MCF 10A (cell line): ENCODE measurements at regions of chr1 and their contacts with region 1.

Region 1: DNA sequence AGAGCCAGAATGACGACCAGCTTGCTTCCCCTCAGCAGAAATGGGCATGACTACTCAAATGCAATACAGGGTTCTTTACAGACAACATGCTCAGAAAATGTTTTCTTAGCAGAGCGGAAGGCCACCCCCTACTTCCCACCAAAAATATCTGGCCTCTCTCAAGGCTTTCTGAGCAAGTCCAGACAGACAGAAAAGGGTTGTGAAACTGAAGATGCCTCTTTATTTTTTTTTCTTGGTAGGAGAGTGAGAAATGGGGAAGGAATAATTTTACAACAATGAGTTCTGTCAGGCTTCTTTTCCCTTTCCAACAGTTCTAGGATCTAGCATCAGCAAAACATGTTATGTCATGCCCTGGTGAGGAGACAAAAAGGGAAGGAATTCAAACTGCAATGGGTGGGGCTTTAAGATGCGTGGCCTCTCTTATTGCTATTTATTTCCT is 172.0 kb upstream of the CAMK1G start:
- DNase-seq: peak; percentile 99
- H3K4me3 Mint-ChIP-seq: peak overlapping the region; percentile 44
- H3K27ac Mint-ChIP-seq: peak overlapping the region; percentile 89
- H3K4me1 Mint-ChIP-seq: peaks cover 70% of the 10 kb centered on the region
- H3K27me3 Mint-ChIP-seq: no peaks in the 10 kb centered on the region
- CTCF ChIP-seq: no peak

Region 2: DNA sequence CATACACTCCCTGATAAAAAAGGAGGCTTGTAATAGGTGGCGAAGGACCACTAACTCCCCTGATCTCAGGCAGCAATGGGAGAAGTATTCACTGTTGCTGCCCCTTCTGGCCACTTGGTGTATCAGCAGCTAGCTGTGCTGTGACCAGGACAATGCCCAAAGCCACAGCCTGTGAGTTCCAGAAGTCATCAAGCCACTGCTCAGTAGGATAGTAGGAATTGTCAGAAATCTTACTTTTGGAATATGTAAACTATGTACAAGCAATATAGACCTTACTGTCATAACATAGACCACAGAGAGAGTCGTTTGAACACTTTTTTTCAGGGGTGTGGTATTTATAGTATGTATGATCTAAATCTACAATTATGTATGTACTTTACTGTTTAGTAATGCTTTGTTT is 76.3 kb before region 1 on chr1:
- CTCF ChIA-PET with region 1: interaction called, 11 read pairs
- POLR2A ChIA-PET with region 1: no interaction called
- intact Hi-C with region 1: no loop called
- DNase-seq: peak; percentile 75
- H3K4me3 Mint-ChIP-seq: no peak overlapping the region
- H3K27ac Mint-ChIP-seq: no peak overlapping the region
- H3K4me1 Mint-ChIP-seq: peaks cover 5% of the 10 kb centered on the region
- H3K27me3 Mint-ChIP-seq: no peaks in the 10 kb centered on the region
- CTCF ChIP-seq: peak; percentile 96

Region 3: DNA sequence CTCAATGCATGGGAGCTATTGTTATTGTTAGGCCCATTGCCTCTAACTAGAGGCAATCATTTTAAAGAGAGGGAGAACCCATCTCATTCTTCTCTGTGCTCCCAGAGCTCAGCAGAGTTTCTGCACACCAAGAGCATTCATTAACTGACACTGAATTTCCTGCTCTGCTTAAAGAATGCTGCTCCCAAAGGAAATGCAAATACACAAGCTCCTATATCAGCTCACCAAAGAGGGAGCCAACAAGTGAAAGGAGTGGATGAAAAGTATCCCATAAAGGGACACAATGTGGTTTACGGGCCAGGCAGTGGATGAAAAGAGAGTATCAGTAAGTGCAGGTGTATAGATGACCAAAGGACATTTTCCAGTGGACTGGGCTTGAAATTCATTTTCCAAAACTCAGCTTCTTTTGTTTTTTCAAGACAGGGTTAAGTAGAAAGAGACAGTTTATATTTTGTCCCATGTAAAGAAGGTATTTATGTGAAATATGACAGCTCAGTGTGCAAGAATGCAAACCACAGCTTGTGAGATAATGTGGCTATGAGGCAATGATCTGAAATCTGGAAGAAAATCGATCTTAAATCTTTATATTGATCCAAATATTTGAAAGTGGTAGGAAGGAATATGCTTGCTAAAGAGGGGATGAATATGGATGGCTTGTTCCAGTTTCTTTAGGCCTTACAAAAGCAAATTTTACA is 35.7 kb before region 1 on chr1:
- CTCF ChIA-PET with region 1: interaction called, 1,242 read pairs
- POLR2A ChIA-PET with region 1: interaction called, 6,956 read pairs
- intact Hi-C with region 1: no loop called
- DNase-seq: no peak
- H3K4me3 Mint-ChIP-seq: no peak overlapping the region
- H3K27ac Mint-ChIP-seq: peak overlapping the region; percentile 84
- H3K4me1 Mint-ChIP-seq: peaks cover 69% of the 10 kb centered on the region
- H3K27me3 Mint-ChIP-seq: no peaks in the 10 kb centered on the region
- CTCF ChIP-seq: no peak

Region 4: DNA sequence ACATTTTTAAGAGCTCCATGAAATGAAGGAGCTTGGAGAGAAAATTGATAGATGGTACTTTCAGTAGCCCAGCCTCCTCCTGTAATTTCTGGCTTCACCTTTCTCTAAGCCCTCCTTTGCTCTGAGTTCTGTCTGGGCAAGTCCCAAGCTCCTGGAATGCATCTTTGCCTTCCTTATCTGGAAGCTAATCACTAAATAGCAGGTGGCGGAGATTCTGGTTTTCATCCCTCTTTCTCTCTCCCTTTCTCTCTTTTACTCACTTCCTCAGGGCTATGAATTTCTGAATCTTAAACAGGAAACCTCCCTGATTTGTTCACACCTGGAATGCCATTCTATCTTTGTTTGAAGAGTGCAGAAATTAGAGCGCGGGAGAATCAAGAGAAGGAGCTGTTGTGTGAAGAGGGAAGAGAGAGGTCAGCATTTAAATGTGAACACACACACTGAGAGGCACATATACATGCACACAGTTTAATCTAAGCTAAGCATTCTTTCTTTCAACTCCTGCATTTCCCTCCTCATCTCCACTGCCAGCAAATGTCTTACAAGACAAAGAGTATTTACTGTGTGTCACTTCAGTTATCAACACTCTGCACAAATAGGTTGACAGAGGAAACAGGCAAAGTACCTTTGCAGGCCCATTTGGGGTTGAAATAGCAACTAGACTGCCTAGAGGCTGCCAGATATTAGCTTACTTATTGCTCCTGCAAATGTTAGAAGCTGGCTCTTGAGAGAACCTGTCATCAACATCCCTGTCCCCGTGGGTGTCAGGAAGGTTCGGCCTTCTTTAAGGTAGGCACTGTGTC is 27.4 kb before region 1 on chr1:
- CTCF ChIA-PET with region 1: interaction called, 1,242 read pairs
- POLR2A ChIA-PET with region 1: interaction called, 6,956 read pairs
- intact Hi-C with region 1: loop called (anchors 2 kb)
- DNase-seq: peak; percentile 72
- H3K4me3 Mint-ChIP-seq: peak overlapping the region; percentile 15
- H3K27ac Mint-ChIP-seq: peak overlapping the region; percentile 81
- H3K4me1 Mint-ChIP-seq: peaks cover 65% of the 10 kb centered on the region
- H3K27me3 Mint-ChIP-seq: no peaks in the 10 kb centered on the region
- CTCF ChIP-seq: no peak

Region 5: DNA sequence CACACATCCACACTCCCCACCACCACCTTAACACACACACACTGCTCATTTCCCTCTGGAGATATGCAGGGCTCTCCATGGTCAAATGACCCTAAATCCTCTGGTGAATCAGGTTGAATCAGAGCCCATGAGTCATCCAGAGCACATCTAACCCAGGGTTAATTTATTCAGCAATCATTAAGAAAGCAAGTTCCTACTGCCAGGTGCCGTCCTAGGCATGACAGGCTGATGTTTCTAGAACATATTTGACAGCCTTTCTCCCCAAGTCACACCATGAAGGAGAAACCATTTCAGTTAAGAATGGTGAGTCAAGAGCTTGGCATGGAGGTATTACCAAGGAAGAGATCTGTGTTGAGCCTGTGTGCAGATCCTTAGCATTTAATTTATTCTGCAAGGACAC is 22.3 kb before region 1 on chr1:
- CTCF ChIA-PET with region 1: interaction called, 1,242 read pairs
- POLR2A ChIA-PET with region 1: interaction called, 6,956 read pairs
- intact Hi-C with region 1: loop called (anchors 2 kb)
- DNase-seq: peak; percentile 99
- H3K4me3 Mint-ChIP-seq: peak overlapping the region; percentile 22
- H3K27ac Mint-ChIP-seq: peak overlapping the region; percentile 79
- H3K4me1 Mint-ChIP-seq: peaks cover 45% of the 10 kb centered on the region
- H3K27me3 Mint-ChIP-seq: no peaks in the 10 kb centered on the region
- CTCF ChIP-seq: no peak

Region 6: DNA sequence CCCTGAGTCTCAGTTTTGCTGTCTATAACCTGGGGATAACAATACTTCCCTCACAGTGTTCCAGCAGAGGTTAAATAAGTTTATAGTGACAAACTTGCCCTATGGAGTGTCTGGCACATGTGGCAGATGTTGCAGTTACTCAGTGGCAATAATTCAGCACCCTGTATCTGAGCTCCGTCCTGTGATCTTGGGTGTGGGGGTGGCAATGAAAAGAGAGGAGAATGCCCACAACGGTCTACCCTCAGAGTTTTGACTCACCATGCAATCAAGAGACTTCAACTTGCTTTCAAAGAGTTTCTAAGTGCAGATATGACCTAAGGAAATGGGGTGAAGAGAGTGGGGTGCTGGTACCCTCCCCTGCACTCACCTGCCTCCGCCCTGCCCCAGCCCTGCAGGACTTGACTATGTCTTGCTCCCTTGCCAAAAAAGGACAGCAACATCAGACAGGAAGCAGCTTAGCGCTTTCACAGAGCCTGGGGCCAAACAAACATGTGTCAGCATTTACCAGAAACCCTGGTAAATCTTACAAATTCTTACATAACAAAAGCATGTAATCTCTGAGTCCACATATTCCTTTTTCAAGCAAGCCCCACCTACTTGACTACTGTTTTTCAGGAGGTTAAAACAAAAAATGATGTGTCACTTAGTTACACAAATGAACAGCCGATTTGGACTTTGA is 13.1 kb before region 1 on chr1:
- CTCF ChIA-PET with region 1: interaction called, 41 read pairs
- POLR2A ChIA-PET with region 1: interaction called, 596 read pairs
- intact Hi-C with region 1: no loop called
- DNase-seq: peak; percentile 100
- H3K4me3 Mint-ChIP-seq: peak overlapping the region; percentile 29
- H3K27ac Mint-ChIP-seq: peak overlapping the region; percentile 79
- H3K4me1 Mint-ChIP-seq: peaks cover 28% of the 10 kb centered on the region
- H3K27me3 Mint-ChIP-seq: no peaks in the 10 kb centered on the region
- CTCF ChIP-seq: no peak

Region 7: DNA sequence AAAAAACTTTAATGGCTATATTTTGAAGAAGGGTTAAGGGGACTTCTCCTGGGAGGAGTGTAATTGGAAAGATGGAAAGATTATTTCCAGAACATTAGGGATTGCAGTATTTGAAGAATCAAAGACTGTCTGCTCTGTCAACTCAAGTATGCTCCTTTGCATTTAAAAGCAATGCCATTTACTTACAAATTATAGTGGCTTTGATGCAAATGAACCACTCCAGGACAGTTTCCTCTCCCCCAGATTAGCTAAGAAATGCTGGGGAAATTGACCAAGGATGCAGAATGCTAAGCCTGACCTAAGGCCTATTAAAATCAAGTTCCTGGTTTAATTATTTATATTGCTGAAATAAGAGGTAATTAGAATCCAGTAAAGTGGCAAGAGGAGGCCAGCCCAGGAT is 61.5 kb after region 1 on chr1:
- CTCF ChIA-PET with region 1: no interaction called
- POLR2A ChIA-PET with region 1: no interaction called
- intact Hi-C with region 1: no loop called
- DNase-seq: no peak
- H3K4me3 Mint-ChIP-seq: no peak overlapping the region
- H3K27ac Mint-ChIP-seq: no peak overlapping the region
- H3K4me1 Mint-ChIP-seq: peaks cover 5% of the 10 kb centered on the region
- H3K27me3 Mint-ChIP-seq: no peaks in the 10 kb centered on the region
- CTCF ChIP-seq: no peak

Region 8: DNA sequence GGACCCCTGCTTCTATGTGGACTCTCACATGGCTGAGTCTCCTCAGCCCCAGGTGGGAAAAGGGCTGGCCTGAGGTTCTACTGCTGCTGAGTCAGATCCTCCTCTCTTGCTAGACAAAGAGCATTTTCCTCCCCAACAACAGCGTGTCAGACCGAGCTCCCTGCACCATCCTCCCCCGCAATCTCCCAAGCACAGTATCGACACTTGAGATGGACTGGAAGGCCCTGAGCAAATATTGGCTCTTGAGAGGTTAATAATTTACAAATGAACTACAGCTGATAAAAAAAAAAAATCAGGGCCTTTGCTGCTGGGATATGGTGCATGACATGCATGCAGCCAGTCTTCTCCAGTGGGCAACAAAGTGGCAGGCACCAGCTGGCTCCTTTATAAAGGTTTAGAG is 116.5 kb after region 1 on chr1:
- CTCF ChIA-PET with region 1: no interaction called
- POLR2A ChIA-PET with region 1: interaction called, 18 read pairs
- intact Hi-C with region 1: no loop called
- DNase-seq: peak; percentile 36
- H3K4me3 Mint-ChIP-seq: no peak overlapping the region
- H3K27ac Mint-ChIP-seq: peak overlapping the region; percentile 60
- H3K4me1 Mint-ChIP-seq: peaks cover 64% of the 10 kb centered on the region
- H3K27me3 Mint-ChIP-seq: no peaks in the 10 kb centered on the region
- CTCF ChIP-seq: no peak

Region 9: DNA sequence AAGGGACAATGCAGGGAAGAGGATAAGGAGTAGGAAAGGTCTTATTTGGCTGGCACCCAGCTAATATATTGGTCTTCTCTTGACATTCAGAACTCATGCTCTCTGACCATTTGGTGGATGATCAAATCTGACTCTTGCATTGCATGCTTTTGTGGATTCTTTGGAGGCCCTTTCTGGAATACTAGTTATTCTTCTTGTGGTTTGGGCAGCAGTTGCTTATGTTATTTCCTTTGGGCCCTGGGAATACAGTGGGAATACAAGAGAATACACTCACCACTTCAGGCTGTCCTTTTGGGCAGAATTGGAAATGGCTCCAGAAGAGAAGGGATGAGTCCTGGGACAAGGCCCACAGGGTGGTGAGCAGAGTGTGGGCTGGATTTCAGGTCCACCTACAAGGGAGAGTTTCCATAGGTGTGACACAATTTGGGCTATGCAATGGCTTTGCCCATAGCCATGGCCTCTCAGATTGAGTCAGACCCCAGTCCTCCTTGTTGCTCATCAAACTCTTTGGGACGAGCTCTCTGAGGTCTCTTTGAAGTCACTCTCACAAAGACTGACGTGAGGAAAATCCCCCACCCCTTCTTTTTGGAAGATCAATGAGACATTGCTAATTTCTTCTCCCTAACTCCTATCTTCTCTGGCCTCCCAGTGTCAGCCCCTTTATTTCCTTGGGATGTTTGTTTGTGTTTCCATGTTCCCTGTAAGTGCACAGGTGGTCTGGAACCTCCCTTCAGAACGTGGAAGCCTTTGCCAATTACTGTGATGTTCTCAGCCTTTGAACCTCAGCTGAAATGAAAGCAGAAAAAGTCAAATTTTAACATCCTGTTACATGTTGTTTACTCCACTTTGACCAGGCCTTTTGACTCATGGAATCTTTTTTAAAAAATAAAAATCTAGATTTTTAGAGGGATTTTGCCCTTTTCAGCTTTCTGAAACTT is 312.5 kb after region 1 on chr1:
- CTCF ChIA-PET with region 1: no interaction called
- POLR2A ChIA-PET with region 1: no interaction called
- intact Hi-C with region 1: no loop called
- DNase-seq: no peak
- H3K4me3 Mint-ChIP-seq: no peak overlapping the region
- H3K27ac Mint-ChIP-seq: no peak overlapping the region
- H3K4me1 Mint-ChIP-seq: no peaks in the 10 kb centered on the region
- H3K27me3 Mint-ChIP-seq: no peaks in the 10 kb centered on the region
- CTCF ChIP-seq: no peak